ENCODE measurements at regions of chr5 and their contacts with region 1.

Region 1: GRCh38 chr5:139765409-139766217 is 30.0 kb upstream of the PSD2 start:
- DNase-seq: peak; percentile 76 to 86 (median 82)
- H3K4me3 ChIP-seq: peak overlapping the region; percentile 47
- H3K4me3 Mint-ChIP-seq: peak overlapping the region; percentile 20 to 80 (median 68)
- H3K27ac ChIP-seq: no peak overlapping the region
- H3K27ac Mint-ChIP-seq: peak overlapping the region in 6 of 8 donors; percentile 17 to 67 (median 52)
- H3K4me1 ChIP-seq: peaks cover 5% of the 10 kb centered on the region
- H3K4me1 Mint-ChIP-seq: peaks cover 11 to 18% (median 13%) of the 10 kb centered on the region in 3 donors
- H3K27me3 ChIP-seq: peaks cover 19% of the 10 kb centered on the region
- H3K27me3 Mint-ChIP-seq: peaks cover 18 to 26% of the 10 kb centered on the region in 2 donors

Region 2: DNA sequence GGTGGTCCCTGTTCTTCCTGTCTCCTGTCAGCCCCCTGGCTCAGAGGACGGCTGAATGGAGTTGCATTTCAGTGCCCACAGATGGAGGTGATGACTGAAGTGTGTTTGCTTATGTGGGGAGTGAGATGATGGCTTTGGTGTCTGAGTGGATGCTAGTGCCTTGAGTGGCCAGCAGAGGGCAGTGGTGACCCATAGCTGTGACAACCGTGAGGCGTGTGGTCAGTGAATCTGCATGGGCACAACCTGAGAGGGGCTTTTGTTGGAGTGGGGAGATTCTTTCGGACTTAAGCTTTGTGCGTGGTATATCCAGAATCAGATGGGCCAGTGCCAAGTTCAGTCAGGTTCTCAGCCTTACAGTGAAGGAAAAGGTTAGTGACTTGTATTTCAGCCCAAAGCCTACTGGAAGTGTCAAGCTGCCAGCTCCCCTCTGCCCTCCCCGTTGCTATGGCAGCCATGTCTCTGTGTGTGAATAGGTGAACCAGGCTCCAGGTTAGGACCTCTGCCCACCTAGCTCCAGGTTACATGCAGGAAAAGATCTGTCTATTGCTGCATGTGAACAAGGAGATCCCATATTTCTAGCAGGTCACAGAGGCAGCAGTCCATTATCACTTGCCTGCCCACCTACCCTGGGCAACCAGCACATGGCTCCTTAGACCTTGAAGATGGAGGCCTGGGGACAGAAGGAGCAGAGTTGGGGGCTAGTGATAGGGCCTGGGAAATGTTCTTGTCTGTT is 132.2 kb before region 1 on chr5:
- CTCF ChIA-PET with region 1: interaction called, 189 read pairs
- POLR2A ChIA-PET with region 1: interaction called, 10 read pairs
- DNase-seq: peak; percentile 56 to 73 (median 63)
- H3K4me3 ChIP-seq: no peak overlapping the region
- H3K4me3 Mint-ChIP-seq: peak overlapping the region in 2 of 7 donors; percentile 1 to 2
- H3K27ac ChIP-seq: no peak overlapping the region
- H3K27ac Mint-ChIP-seq: peak overlapping the region in 7 of 8 donors; percentile 6 to 83 (median 68)
- H3K4me1 ChIP-seq: peaks cover 35% of the 10 kb centered on the region
- H3K4me1 Mint-ChIP-seq: peaks cover 36 to 47% (median 43%) of the 10 kb centered on the region in 3 donors
- H3K27me3 ChIP-seq: no peaks in the 10 kb centered on the region
- H3K27me3 Mint-ChIP-seq: no peaks in the 10 kb centered on the region

Region 3: GRCh38 chr5:139670369-139671095 is 95.1 kb before region 1 on chr5:
- CTCF ChIA-PET with region 1: interaction called, 14 read pairs
- POLR2A ChIA-PET with region 1: no interaction called
- DNase-seq: peak in 1 of 5 donors; percentile 62
- H3K4me3 ChIP-seq: peak overlapping the region; percentile 66
- H3K4me3 Mint-ChIP-seq: peak overlapping the region; percentile 86 to 94 (median 91)
- H3K27ac ChIP-seq: peak overlapping the region; percentile 66
- H3K27ac Mint-ChIP-seq: peak overlapping the region; percentile 91 to 99 (median 96)
- H3K4me1 ChIP-seq: peaks cover 46% of the 10 kb centered on the region
- H3K4me1 Mint-ChIP-seq: peaks cover 54 to 57% (median 55%) of the 10 kb centered on the region in 3 donors
- H3K27me3 ChIP-seq: no peaks in the 10 kb centered on the region
- H3K27me3 Mint-ChIP-seq: no peaks in the 10 kb centered on the region

Region 4: DNA sequence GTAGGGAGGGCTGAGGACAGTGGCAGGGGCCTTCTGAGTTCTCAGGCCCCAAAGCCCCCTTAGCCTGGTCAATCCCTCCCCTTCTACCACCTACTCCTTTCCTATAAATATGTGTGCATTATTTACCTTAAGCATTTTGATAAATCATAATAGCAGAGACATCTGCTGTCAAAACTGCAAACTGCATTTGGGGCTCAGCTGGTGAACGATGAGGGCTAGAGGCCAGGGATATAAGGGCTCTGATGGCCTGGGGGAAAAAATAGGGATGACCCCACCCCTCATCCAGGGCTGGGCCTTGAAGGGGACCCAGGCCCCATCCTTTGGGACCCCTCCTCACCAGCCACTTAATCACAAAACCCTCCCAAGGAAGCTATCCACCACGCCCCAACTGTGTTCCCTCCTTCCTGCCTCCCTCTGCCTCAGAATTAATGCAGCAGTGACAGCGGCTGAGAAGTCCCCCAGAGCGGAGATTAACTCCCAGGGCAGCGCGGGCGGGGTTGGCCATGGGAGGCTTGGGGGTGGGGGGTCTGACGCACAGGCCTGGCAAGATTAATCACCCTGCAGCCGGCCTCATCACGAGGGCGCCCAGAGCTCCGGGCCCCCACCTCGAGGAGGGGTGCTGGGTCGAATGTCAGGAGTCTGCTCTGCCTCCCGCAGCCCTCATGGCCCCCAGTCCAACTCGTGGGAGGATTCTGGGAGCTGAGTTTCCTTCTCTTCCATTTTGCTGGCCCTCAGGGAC is 75.4 kb before region 1 on chr5:
- CTCF ChIA-PET with region 1: interaction called, 14 read pairs
- POLR2A ChIA-PET with region 1: no interaction called
- DNase-seq: peak in 1 of 5 donors; percentile 24
- H3K4me3 ChIP-seq: no peak overlapping the region
- H3K4me3 Mint-ChIP-seq: no peak overlapping the region
- H3K27ac ChIP-seq: no peak overlapping the region
- H3K27ac Mint-ChIP-seq: peak overlapping the region in 5 of 8 donors; percentile 15 to 72 (median 68)
- H3K4me1 ChIP-seq: no peaks in the 10 kb centered on the region
- H3K4me1 Mint-ChIP-seq: peaks cover 0 to 9% (median 4%) of the 10 kb centered on the region in 3 donors
- H3K27me3 ChIP-seq: no peaks in the 10 kb centered on the region
- H3K27me3 Mint-ChIP-seq: no peaks in the 10 kb centered on the region

Region 5: DNA sequence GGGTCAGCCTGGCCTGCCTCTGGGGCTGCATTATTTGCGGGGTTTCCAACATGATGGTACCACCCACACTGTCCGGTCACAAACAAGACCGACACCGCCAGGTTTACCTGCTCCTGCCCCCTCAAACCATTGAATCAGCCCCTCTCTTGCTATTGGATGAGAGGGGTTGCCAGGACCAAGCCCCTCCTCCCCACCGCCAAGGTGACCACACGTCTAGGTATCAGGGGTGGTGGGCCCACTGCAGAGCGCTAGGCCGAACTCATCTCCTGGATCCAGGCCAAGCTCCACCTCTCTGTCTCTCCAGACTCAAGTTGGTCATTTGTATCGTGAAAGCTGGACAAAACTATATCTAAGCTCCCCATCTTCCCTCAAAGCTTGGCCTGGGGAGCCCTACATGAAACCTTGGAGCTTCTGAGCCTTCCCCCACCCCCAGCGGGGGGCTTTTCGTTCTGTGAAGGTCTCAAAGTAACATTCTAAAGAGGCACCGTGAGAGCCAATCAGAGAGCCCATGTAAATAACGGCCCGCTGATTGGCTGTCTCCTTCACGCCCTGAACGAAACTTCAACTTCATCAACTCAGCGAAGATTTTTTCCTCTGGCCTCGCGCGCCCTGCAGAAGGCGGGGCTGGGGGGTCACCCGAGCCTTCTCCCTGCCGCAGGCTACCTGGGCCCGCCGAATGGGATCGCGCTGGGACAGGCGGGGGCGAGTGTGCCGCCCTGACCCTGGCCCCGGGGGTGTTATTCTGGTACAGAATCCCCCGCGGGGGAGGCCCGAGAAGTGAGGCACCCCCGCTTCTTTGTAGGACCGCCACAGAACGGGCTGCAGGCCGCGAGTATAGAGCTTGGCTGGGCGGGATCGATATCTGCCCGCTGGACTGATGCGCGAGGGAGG is 19.6 kb before region 1 on chr5:
- CTCF ChIA-PET with region 1: interaction called, 34 read pairs
- POLR2A ChIA-PET with region 1: no interaction called
- DNase-seq: peak; percentile 33 to 74 (median 46)
- H3K4me3 ChIP-seq: peak overlapping the region; percentile 70
- H3K4me3 Mint-ChIP-seq: peak overlapping the region; percentile 87 to 91 (median 90)
- H3K27ac ChIP-seq: no peak overlapping the region
- H3K27ac Mint-ChIP-seq: peak overlapping the region; percentile 37 to 99 (median 86)
- H3K4me1 ChIP-seq: peaks cover 24% of the 10 kb centered on the region
- H3K4me1 Mint-ChIP-seq: peaks cover 16 to 34% (median 25%) of the 10 kb centered on the region in 3 donors
- H3K27me3 ChIP-seq: peaks cover 11% of the 10 kb centered on the region
- H3K27me3 Mint-ChIP-seq: no peaks in the 10 kb centered on the region

Region 6: DNA sequence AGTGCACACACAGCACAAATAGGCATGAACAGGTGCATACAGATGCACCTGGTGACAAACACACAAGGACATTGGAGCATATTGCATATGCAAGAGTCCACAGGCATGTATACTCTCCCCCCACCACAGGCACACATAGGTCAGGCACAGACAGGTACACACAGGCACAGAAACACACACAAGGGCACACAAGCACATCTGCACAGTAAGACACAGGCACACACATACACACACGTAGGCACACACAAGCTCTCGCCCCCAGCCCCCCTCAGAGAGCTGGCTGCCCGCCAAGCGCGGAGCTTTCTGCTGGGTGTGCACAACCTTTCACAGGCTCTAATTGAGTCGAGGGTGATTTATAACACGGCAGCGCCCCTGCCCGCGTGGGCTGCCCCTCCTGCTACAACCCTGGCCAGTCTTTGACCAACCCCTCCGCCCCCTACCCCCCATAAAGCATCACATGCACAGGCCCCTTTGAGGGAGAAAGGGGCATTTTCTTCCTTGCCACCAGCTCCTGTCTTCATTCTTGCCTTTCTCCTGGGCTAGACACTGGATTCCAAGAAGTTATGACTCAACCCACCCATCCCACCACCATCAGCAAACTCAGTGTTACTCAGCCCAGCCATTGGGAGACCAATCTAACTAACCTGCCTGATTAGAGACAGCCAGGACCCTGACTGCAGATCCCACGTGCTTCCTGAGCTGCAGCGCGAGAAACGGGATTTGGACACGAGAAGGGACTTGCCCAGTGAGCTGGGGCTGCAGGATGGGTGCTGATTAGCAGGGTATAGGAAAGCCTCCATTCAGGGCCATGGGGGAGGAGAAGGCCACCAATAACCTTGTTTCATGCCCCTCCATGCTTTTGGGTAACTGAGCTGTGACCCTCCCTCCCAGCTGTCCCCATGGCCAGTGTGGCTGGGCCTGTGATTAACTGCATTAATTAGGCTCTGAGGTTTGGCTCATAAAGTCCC is 12.8 kb before region 1 on chr5:
- CTCF ChIA-PET with region 1: interaction called, 34 read pairs
- POLR2A ChIA-PET with region 1: no interaction called
- DNase-seq: no peak
- H3K4me3 ChIP-seq: no peak overlapping the region
- H3K4me3 Mint-ChIP-seq: peak overlapping the region in 1 of 7 donors; percentile 1
- H3K27ac ChIP-seq: no peak overlapping the region
- H3K27ac Mint-ChIP-seq: no peak overlapping the region
- H3K4me1 ChIP-seq: peaks cover 22% of the 10 kb centered on the region
- H3K4me1 Mint-ChIP-seq: peaks cover 18 to 36% (median 21%) of the 10 kb centered on the region in 3 donors
- H3K27me3 ChIP-seq: peaks cover 32% of the 10 kb centered on the region
- H3K27me3 Mint-ChIP-seq: peaks cover 19 to 28% of the 10 kb centered on the region in 2 donors

Region 7: DNA sequence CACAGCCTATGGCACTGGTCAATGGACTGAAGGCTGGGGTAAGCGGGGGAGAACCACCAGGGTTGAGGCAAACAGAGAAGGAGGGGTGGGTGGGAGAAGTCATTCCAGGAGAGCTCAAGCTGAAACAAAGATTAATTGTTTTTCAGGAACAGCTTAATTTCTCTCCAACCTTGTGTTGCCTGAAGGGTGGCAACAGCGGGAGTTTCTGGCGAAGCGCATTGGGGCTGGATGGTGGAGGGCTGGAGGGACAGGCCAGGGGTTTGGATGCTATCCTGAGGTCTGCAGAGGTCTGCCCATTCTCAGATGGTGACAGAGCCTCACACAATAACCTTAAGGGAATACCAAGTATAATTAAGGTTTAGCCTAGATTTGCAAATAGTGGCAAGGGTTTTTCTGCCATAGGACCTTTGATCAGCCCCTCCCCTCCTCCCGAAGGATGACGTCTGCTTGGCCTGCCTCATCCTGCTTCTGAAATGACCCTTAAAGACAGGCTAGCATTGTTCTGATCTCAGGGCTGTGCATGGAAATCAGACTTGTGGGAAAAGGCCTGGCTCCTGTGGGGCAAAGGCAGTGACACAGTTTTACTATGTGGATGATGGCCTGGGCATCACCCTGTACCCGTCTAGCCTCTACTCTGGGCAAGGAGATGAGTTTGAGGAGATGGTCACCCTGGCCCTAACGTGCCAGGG is 62.7 kb after region 1 on chr5:
- CTCF ChIA-PET with region 1: no interaction called
- POLR2A ChIA-PET with region 1: no interaction called
- DNase-seq: peak in 1 of 5 donors; percentile 21
- H3K4me3 ChIP-seq: no peak overlapping the region
- H3K4me3 Mint-ChIP-seq: no peak overlapping the region
- H3K27ac ChIP-seq: no peak overlapping the region
- H3K27ac Mint-ChIP-seq: no peak overlapping the region
- H3K4me1 ChIP-seq: no peaks in the 10 kb centered on the region
- H3K4me1 Mint-ChIP-seq: no peaks in the 10 kb centered on the region
- H3K27me3 ChIP-seq: no peaks in the 10 kb centered on the region
- H3K27me3 Mint-ChIP-seq: peaks cover 7 to 19% of the 10 kb centered on the region in 2 donors